ENCODE measurements at regions of chr2 and their contacts with region 1.

Region 1: DNA sequence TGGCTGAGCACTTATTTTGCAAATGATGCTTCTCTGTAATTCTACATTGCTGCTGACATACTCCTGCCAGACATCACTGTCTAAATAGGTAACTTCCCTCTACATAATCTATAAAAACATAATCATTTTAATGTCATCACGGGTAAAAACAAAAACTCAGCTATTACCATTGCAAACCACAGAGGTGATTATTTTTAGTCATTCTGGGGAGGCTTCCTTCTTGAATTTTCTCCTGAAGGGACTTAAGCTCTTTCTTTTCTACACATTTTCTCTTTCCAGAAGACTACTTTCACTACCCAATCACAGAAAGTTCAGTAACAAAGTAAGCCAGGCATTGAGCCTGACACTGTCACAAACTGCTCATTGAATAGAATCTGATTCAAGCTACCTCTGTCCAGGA is 40.4 kb upstream of the NFU1 start:
- DNase-seq: no peak
- H3K4me3 Mint-ChIP-seq: no peak overlapping the region
- H3K27ac Mint-ChIP-seq: peak overlapping the region; percentile 50
- H3K4me1 Mint-ChIP-seq: peaks cover 42% of the 10 kb centered on the region
- H3K27me3 Mint-ChIP-seq: no peaks in the 10 kb centered on the region

Region 2: GRCh38 chr2:69453475-69454129 is 24.0 kb before region 1 on chr2:
- CTCF ChIA-PET with region 1: no interaction called
- intact Hi-C with region 1: loop called (anchors 2 kb)
- DNase-seq: peak; percentile 72
- H3K4me3 Mint-ChIP-seq: no peak overlapping the region
- H3K27ac Mint-ChIP-seq: no peak overlapping the region
- H3K4me1 Mint-ChIP-seq: peaks cover 24% of the 10 kb centered on the region
- H3K27me3 Mint-ChIP-seq: no peaks in the 10 kb centered on the region